ENCODE measurements at regions of chr6 and their contacts with region 1.

Region 1: DNA sequence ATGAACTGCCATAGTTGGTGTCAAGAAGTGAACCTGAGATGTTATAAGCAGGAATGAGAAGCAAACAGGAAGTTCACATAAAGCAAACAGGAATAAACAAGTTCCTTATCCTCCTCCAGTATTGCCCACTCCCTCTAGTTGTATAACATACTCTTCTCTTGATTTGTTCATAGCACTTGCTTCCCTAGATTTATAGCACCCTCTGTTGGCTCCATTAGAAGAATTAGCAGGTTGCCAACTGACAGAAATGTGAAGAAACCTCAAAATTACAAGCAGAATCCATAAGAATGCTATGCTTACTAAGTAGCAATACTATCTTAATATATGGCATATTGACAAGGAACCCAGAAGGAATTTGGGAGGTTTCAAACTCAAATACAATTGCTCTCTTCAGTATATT is 195.4 kb downstream of the TBX18 start:
- DNase-seq: no peak
- ATAC-seq: no peak
- H3K4me3 ChIP-seq: no peak overlapping the region
- H3K27ac ChIP-seq: no peak overlapping the region
- H3K4me1 ChIP-seq: no peaks in the 10 kb centered on the region
- H3K27me3 ChIP-seq: no peaks in the 10 kb centered on the region

Region 2: GRCh38 chr6:84422380-84422968 is 146.5 kb before region 1 on chr6:
- intact Hi-C with region 1: loop called in 1 of 2 experiments (anchors 2 kb)
- DNase-seq: peak; percentile 68 to 91
- ATAC-seq: peak; percentile 91
- H3K4me3 ChIP-seq: no peak overlapping the region
- H3K27ac ChIP-seq: no peak overlapping the region
- H3K4me1 ChIP-seq: peaks cover 0 to 7% of the 10 kb centered on the region in 2 donors
- H3K27me3 ChIP-seq: no peaks in the 10 kb centered on the region

Region 3: GRCh38 chr6:85008296-85009009 is 439.5 kb after region 1 on chr6:
- intact Hi-C with region 1: no loop called
- DNase-seq: no peak
- ATAC-seq: no peak
- H3K4me3 ChIP-seq: no peak overlapping the region
- H3K27ac ChIP-seq: no peak overlapping the region
- H3K4me1 ChIP-seq: no peaks in the 10 kb centered on the region
- H3K27me3 ChIP-seq: no peaks in the 10 kb centered on the region

Measured in aorta (tissue), 5 donors.